Activated T-helper 1 cell treated with anti-CD3 and anti-CD28 coated beads, Interleukin-12 subunit alpha, Interleukin-12 subunit beta, Interleukin-2, Interleukin-4 antibody, amounts not matched to agents 30 ng/mL and 10 ng/mL and 1 ng/mL, durations not matched to agents 14 hours and 24 hours and 36 hours (primary cell): ENCODE measurements at regions of chr12 and their contacts with region 1.

Region 1: DNA sequence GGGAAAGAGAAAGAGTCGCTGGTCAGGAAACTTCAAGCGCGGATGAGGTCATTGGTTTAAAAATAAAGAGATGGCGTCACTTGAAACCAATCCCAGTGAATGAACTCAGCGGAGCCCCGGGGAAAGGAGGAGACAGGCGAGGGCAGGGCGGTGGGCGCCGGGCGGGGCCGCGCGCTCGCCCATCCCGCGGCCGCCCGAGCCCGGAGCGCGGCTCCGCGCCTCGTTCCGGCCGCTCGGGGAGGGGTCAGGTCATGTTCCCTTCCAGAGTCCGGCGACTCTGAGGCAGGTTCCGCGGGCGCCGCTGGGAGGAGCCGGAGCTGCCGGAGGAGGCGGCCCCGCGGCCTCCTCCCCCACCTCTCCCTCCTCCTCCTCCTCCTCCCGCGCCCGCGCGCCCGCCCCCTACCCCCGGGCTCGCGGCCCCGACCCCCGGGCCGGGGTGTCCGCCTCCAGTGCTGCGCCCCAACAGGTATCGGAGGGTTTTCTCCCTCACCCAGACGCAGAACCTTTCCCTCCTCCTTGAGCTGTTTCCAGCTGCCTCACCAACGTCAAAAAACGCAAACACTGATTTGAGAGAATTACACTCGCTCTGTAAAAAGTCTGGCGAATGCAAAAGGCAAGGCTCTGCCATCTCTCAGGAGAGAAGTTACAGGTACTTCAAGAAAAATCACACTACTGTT is at the start of gene DUSP16:
- DNase-seq: peak; percentile 85
- H3K4me3 Mint-ChIP-seq: peak within 1 kb of the TSS; percentile 88
- H3K27ac Mint-ChIP-seq: peak within 1 kb of the TSS; percentile 97
- H3K4me1 Mint-ChIP-seq: peaks cover 52% of the 10 kb centered on the region
- H3K27me3 Mint-ChIP-seq: no peaks in the 10 kb centered on the region
- total RNA-seq, gene DUSP16: 49.3 and 52.0 TPM in 2 replicates

Region 2: GRCh38 chr12:12356886-12357718 is 205.6 kb before region 1 on chr12 and contains the start of gene BORCS5:
- intact Hi-C with region 1: loop called (anchors 1 kb)
- DNase-seq: peak; percentile 98
- H3K4me3 Mint-ChIP-seq: peak within 1 kb of the TSS; percentile 97
- H3K27ac Mint-ChIP-seq: peak within 1 kb of the TSS; percentile 96
- H3K4me1 Mint-ChIP-seq: peaks cover 48% of the 10 kb centered on the region
- H3K27me3 Mint-ChIP-seq: no peaks in the 10 kb centered on the region
- total RNA-seq, gene BORCS5: 34.5 and 39.6 TPM in 2 replicates

Region 3: DNA sequence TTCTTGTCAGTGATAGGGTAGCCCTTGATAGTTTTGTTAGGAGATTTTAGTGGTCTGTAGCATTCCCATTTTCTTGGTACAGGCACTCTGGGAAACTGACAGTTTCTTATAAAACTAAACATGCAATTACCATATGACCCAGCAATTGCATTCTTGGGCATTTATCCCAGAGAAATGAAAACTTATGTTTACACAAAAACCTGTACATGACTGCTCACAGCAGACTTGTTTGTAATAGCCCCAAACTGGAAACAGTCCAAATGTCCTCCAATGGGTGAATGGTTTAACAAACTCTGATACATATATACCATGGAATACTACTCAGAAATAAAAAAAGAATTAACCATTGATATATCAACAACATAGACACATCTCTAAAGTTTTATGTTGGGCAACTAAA is 130.4 kb before region 1 on chr12:
- intact Hi-C with region 1: no loop called
- DNase-seq: no peak
- H3K4me3 Mint-ChIP-seq: no peak overlapping the region
- H3K27ac Mint-ChIP-seq: no peak overlapping the region
- H3K4me1 Mint-ChIP-seq: peaks cover 48% of the 10 kb centered on the region
- H3K27me3 Mint-ChIP-seq: no peaks in the 10 kb centered on the region

Region 4: DNA sequence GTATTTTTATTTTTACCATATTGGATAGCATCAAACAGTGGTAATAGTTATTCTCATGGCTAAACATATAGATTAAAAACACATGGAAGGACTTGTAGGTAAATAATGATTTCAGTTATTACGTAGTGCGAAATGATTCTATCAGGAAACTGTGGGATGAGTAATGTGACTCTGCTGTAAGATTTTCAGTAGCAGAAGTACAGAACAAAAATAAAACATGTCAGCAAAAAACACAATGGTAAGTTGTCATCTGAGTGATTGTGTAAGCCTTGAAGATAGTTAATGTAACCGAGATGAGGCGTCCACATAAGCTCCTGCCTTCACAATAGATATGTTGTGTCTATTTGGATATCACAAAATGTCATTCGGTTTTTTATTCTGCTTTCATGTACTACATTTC is 106.1 kb before region 1 on chr12:
- intact Hi-C with region 1: loop called (anchors 5 kb)
- DNase-seq: no peak
- H3K4me3 Mint-ChIP-seq: peak overlapping the region; percentile 58
- H3K27ac Mint-ChIP-seq: peak overlapping the region; percentile 88
- H3K4me1 Mint-ChIP-seq: peaks cover 60% of the 10 kb centered on the region
- H3K27me3 Mint-ChIP-seq: no peaks in the 10 kb centered on the region

Region 5: DNA sequence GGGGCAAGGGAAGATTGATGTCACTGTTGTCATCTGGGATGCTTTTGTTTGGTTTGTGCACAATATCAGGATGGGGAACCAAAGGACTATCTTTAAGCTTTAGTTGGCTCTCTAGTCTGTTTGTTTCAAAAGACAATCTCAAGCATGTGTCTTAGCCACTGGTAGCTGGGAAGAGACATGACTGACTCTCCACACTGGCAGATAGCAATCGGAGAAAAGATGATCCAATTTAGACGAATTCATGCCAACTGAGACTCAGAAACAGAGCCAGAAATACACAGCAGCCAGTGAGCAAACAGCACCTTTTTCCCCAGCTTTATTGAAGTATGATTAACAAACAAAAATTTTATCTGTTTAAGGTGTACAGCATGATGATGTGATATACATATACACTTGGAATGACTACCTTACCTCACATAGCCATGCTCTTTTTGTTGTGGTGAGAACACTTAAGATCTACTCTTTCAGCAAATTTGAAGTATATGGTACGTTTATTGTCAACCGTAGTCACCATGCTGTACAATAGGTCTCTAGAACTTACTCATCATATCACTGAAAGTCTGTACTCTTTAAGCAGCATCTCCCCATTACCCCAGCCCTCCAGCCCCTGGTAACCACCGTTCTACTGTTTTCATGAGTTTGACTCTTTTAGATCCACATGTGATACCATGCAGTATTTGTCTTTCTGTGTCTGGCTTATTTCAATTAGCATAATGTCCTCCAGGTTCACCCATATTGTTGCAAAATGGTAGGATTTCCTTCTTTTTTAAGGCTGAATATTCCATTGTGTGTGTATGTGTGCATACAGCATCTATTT is 50.6 kb before region 1 on chr12:
- intact Hi-C with region 1: loop called (anchors 1 kb)
- DNase-seq: no peak
- H3K4me3 Mint-ChIP-seq: no peak overlapping the region
- H3K27ac Mint-ChIP-seq: no peak overlapping the region
- H3K4me1 Mint-ChIP-seq: peaks cover 23% of the 10 kb centered on the region
- H3K27me3 Mint-ChIP-seq: no peaks in the 10 kb centered on the region

Region 6: GRCh38 chr12:12592930-12593329 is 30.2 kb after region 1 on chr12:
- intact Hi-C with region 1: no loop called
- DNase-seq: no peak
- H3K4me3 Mint-ChIP-seq: no peak overlapping the region
- H3K27ac Mint-ChIP-seq: no peak overlapping the region
- H3K4me1 Mint-ChIP-seq: peaks cover 7% of the 10 kb centered on the region
- H3K27me3 Mint-ChIP-seq: peaks cover 6% of the 10 kb centered on the region

Region 7: DNA sequence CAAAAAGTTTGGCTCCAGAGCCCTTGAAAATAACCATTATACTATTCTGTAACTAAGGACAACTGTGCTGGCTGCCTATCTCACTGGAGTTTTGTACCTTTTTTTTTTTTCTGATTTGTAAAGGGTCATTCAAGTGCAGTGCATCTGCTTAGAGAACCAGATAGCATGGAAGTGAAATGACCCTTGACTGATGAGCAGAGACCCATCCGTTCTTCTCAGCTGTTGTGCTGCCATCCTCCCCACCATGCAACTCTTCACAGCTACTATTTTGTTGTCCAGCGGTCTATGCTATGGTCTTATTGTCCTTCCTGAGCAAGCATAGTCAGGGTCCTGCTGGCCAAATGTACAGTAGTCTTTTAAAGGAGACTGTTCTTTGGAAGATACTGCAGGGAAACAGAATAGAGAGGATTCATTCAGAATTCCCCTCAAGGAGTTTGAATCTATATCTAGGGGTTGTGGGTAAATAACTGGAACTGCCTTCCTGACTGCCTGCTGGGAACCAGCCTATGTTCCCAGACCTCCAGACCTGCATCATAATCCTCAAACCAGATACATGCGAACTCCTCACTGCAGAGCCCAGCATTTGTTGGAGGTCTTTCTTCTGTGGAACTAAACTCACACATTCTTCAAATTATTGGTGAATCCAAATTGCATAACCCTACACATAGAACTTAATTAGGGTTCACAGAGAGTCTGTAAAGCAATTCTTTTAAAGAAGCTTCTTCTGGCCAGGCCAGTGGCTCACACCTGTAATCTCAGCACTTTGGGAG is 92.2 kb after region 1 on chr12:
- intact Hi-C with region 1: loop called (anchors 5 kb)
- DNase-seq: no peak
- H3K4me3 Mint-ChIP-seq: no peak overlapping the region
- H3K27ac Mint-ChIP-seq: no peak overlapping the region
- H3K4me1 Mint-ChIP-seq: peaks cover 12% of the 10 kb centered on the region
- H3K27me3 Mint-ChIP-seq: no peaks in the 10 kb centered on the region

Region 8: DNA sequence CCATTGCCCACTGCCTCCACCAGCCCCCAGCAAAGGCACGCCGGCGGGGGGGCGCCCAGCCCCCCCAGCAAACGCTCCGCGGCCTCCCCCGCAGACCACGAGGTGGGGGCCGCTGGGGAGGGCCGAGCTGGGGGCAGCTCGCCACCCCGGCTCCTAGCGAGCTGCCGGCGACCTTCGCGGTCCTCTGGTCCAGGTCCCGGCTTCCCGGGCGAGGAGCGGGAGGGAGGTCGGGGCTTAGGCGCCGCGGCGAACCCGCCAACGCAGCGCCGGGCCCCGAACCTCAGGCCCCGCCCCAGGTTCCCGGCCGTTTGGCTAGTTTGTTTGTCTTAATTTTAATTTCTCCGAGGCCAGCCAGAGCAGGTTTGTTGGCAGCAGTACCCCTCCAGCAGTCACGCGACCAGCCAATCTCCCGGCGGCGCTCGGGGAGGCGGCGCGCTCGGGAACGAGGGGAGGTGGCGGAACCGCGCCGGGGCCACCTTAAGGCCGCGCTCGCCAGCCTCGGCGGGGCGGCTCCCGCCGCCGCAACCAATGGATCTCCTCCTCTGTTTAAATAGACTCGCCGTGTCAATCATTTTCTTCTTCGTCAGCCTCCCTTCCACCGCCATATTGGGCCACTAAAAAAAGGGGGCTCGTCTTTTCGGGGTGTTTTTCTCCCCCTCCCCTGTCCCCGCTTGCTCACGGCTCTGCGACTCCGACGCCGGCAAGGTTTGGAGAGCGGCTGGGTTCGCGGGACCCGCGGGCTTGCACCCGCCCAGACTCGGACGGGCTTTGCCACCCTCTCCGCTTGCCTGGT is 154.3 kb after region 1 on chr12 and contains the start of gene CDKN1B:
- intact Hi-C with region 1: loop called (anchors 5 kb)
- DNase-seq: peak; percentile 77
- H3K4me3 Mint-ChIP-seq: peak within 1 kb of the TSS; percentile 98
- H3K27ac Mint-ChIP-seq: peak within 1 kb of the TSS; percentile 99
- H3K4me1 Mint-ChIP-seq: peaks cover 71% of the 10 kb centered on the region
- H3K27me3 Mint-ChIP-seq: no peaks in the 10 kb centered on the region
- total RNA-seq, gene CDKN1B: 54.8 and 61.9 TPM in 2 replicates

Region 9: GRCh38 chr12:12764824-12765223 is 202.1 kb after region 1 on chr12:
- intact Hi-C with region 1: no loop called
- DNase-seq: no peak
- H3K4me3 Mint-ChIP-seq: no peak overlapping the region
- H3K27ac Mint-ChIP-seq: no peak overlapping the region
- H3K4me1 Mint-ChIP-seq: no peaks in the 10 kb centered on the region
- H3K27me3 Mint-ChIP-seq: peaks cover 2% of the 10 kb centered on the region

Region 10: DNA sequence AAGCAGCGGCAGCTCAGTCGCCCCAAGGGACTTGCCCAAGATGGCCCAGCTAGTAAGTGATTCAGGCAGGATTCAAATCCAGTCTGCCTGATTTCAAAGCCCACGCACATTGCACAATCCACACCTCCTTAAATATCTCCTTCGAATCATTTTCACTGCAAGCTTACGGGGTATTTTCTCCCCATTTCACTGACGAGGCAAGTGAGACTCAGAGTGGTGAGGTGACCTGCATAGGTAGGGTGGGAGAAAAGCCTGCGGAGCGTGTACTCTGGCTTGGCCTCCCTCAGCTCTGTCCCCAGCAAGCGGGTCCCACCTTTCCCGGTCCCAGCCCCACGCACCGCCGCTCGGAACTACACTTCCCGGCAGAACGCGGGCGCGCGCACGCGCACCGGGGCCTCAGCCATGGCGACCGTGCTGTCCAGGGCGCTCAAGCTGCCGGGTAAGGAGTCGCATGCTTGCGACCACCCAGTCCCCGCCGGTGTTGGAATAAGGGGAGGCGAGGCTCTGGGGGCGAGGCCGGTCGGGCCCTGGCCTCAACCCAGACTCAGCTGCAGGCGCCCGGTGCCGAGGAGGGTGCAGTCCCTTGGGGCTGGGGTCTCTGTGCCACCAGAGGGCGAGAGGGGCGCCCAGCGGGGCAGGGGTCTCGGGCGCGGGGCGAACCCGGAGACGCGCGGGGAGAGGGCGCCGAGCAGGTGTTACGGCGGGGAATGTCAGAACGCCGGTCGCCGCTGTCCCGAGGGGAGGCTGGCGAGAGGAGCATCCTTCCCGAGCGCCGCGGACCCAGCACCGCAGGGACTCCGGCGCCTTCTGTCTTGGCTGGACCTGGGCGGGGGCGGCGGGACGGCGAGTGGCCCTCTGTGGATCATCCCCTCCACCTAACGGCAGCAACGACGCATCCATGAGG is 481.5 kb after region 1 on chr12 and contains the start of gene FAM234B:
- intact Hi-C with region 1: no loop called
- DNase-seq: peak; percentile 62
- H3K4me3 Mint-ChIP-seq: peak within 1 kb of the TSS; percentile 83
- H3K27ac Mint-ChIP-seq: peak within 1 kb of the TSS; percentile 66
- H3K4me1 Mint-ChIP-seq: peaks cover 4% of the 10 kb centered on the region
- H3K27me3 Mint-ChIP-seq: peaks cover 19% of the 10 kb centered on the region
- total RNA-seq, gene FAM234B: 6.0 and 6.6 TPM in 2 replicates